ENCODE measurements at regions of chr12 and their contacts with region 1.

Region 1: GRCh38 chr12:48105862-48106680 is at the start of gene SENP1:
- DNase-seq: peak; percentile 81
- H3K4me3 Mint-ChIP-seq: peak within 1 kb of the TSS; percentile 91
- H3K27ac Mint-ChIP-seq: peak within 1 kb of the TSS; percentile 98
- H3K4me1 Mint-ChIP-seq: peaks cover 28% of the 10 kb centered on the region
- H3K27me3 Mint-ChIP-seq: peaks cover 12% of the 10 kb centered on the region
- CTCF ChIP-seq: no peak
- total RNA-seq, gene SENP1: 21.7 and 24.5 TPM in 2 replicates

Region 2: DNA sequence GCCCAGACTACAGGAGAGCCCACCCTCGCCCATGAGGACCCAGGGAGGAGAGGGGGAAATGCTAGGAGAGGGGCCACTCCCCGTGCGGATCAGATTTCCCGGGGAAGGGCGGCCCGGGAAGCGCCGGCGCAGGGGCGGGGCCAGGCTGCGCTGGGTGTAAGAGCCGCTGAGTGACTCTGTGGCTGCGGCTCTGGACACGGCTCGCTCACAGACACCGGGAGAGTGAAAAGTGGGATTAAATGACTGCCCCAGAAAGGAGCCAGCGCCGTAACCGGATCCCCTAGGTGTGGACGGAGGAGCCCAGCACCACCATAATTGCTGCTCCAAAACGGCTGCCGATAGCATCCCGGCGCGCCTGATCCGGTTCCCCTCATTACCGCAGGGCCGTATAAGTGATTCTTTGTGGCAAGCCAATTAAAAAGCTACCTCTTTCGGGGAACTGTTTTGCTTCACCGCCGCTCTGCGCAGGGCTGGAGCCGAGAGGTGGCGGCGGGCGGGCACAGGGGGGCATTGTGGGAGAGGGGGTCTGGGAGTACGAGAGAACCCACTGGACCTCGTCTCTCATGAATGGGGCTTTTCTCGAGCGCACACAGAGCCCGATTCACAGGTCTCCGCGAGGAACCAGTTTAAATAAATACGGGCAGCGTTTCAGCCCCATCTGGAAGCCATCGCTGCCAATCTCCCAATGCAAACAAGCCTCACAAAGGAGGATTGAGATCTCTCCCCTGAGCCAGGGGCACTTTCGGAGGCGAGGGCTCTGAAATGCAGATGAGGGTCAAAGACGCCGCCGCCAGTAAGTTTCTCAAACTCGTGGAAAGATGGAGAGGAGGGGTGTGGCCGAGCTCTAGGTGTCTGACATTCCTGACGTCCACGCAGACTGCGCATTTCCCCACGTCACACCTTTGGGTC is 104.3 kb before region 1 on chr12:
- CTCF ChIA-PET with region 1: no interaction called
- POLR2A ChIA-PET with region 1: no interaction called
- intact Hi-C with region 1: no loop called
- DNase-seq: peak; percentile 67
- H3K4me3 Mint-ChIP-seq: peak overlapping the region; percentile 91
- H3K27ac Mint-ChIP-seq: peak overlapping the region; percentile 87
- H3K4me1 Mint-ChIP-seq: peaks cover 5% of the 10 kb centered on the region
- H3K27me3 Mint-ChIP-seq: peaks cover 64% of the 10 kb centered on the region
- CTCF ChIP-seq: no peak

Region 3: GRCh38 chr12:48119078-48119833 is 13.2 kb after region 1 on chr12 and contains the start of gene PFKM:
- CTCF ChIA-PET with region 1: interaction called, 5 read pairs
- POLR2A ChIA-PET with region 1: interaction called, 99 read pairs
- intact Hi-C with region 1: no loop called
- DNase-seq: peak; percentile 95
- H3K4me3 Mint-ChIP-seq: peak within 1 kb of the TSS; percentile 92
- H3K27ac Mint-ChIP-seq: peak within 1 kb of the TSS; percentile 32
- H3K4me1 Mint-ChIP-seq: peaks cover 21% of the 10 kb centered on the region
- H3K27me3 Mint-ChIP-seq: peaks cover 11% of the 10 kb centered on the region
- CTCF ChIP-seq: no peak
- total RNA-seq, gene PFKM: 65.9 and 69.3 TPM in 2 replicates

Region 4: GRCh38 chr12:48157018-48157888 is 51.2 kb after region 1 on chr12 and contains the start of gene ASB8:
- CTCF ChIA-PET with region 1: interaction called, 5 read pairs
- POLR2A ChIA-PET with region 1: interaction called, 14 read pairs
- intact Hi-C with region 1: loop called (anchors 2 kb)
- DNase-seq: peak; percentile 97
- H3K4me3 Mint-ChIP-seq: peak within 1 kb of the TSS; percentile 90
- H3K27ac Mint-ChIP-seq: peak within 1 kb of the TSS; percentile 91
- H3K4me1 Mint-ChIP-seq: peaks cover 4% of the 10 kb centered on the region
- H3K27me3 Mint-ChIP-seq: no peaks in the 10 kb centered on the region
- CTCF ChIP-seq: peak; percentile 8
- total RNA-seq, gene ASB8: 23.0 and 24.0 TPM in 2 replicates

Region 5: GRCh38 chr12:48681738-48682532 is 575.9 kb after region 1 on chr12 and contains the start of gene KANSL2:
- CTCF ChIA-PET with region 1: no interaction called
- POLR2A ChIA-PET with region 1: interaction called, 12 read pairs
- intact Hi-C with region 1: no loop called
- DNase-seq: peak; percentile 100
- H3K4me3 Mint-ChIP-seq: peak within 1 kb of the TSS; percentile 95
- H3K27ac Mint-ChIP-seq: peak within 1 kb of the TSS; percentile 96
- H3K4me1 Mint-ChIP-seq: peaks cover 25% of the 10 kb centered on the region
- H3K27me3 Mint-ChIP-seq: no peaks in the 10 kb centered on the region
- CTCF ChIP-seq: no peak
- total RNA-seq, gene KANSL2: 35.3 and 44.2 TPM in 2 replicates